PC-3 (cell line): ENCODE measurements at regions of chr9 and their contacts with region 1.

Region 1: GRCh38 chr9:88870627-88871026 is 120.6 kb upstream of the S1PR3 start:
- DNase-seq: no peak
- ATAC-seq: no peak
- H3K4me3 ChIP-seq: no peak overlapping the region
- H3K27ac ChIP-seq: no peak overlapping the region
- H3K4me1 ChIP-seq: no peaks in the 10 kb centered on the region
- H3K27me3 ChIP-seq: no peaks in the 10 kb centered on the region
- CTCF ChIP-seq: no peak

Region 2: GRCh38 chr9:88076286-88077090 is 794.1 kb before region 1 on chr9:
- CTCF ChIA-PET with region 1: no interaction called
- POLR2A ChIA-PET with region 1: interaction called, 20 read pairs
- intact Hi-C with region 1: no loop called
- DNase-seq: peak; percentile 81
- ATAC-seq: peak; percentile 84
- H3K4me3 ChIP-seq: peak overlapping the region; percentile 73
- H3K27ac ChIP-seq: peak overlapping the region; percentile 70
- H3K4me1 ChIP-seq: peaks cover 23% of the 10 kb centered on the region; the same call in 1 of the 2 replicates
- H3K27me3 ChIP-seq: no peaks in the 10 kb centered on the region
- CTCF ChIP-seq: no peak

Region 3: DNA sequence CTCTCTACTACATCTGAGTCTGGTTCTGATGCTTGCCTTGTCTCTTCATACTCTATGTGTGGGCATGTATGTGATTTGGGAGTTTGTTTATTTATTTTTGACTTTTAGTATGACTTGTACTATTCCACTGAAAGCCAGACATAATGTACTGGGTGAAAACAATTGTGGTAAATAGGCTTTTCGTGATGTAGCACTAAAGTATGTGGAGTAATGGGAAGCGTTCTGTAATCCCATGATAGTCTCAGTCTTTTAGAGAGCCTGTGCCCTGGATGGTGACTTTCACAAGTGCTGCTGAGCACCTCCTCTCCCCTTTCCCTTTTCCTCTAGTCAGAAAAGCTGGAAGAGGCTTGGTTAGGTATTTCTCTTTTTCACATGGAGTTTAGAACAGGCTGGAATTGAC is 34.9 kb after region 1 on chr9:
- CTCF ChIA-PET with region 1: no interaction called
- POLR2A ChIA-PET with region 1: no interaction called
- intact Hi-C with region 1: no loop called
- DNase-seq: no peak
- ATAC-seq: no peak
- H3K4me3 ChIP-seq: no peak overlapping the region
- H3K27ac ChIP-seq: no peak overlapping the region
- H3K4me1 ChIP-seq: no peaks in the 10 kb centered on the region
- H3K27me3 ChIP-seq: no peaks in the 10 kb centered on the region
- CTCF ChIP-seq: no peak